Right ventricle myocardium superior (tissue), 1 donor: ENCODE measurements at regions of chr14 and their contacts with region 1.

Region 1: GRCh38 chr14:63852817-63853731 is at the start of gene SYNE2:
- DNase-seq: peak; percentile 85
- ATAC-seq: peak; percentile 93
- total RNA-seq, gene SYNE2: 193 TPM

Region 2: GRCh38 chr14:63632932-63633514 is 220.1 kb before region 1 on chr14:
- intact Hi-C with region 1: no loop called
- DNase-seq: no peak
- ATAC-seq: no peak

Region 3: GRCh38 chr14:63800651-63801375 is 52.3 kb before region 1 on chr14:
- intact Hi-C with region 1: no loop called
- DNase-seq: no peak
- ATAC-seq: no peak

Region 4: DNA sequence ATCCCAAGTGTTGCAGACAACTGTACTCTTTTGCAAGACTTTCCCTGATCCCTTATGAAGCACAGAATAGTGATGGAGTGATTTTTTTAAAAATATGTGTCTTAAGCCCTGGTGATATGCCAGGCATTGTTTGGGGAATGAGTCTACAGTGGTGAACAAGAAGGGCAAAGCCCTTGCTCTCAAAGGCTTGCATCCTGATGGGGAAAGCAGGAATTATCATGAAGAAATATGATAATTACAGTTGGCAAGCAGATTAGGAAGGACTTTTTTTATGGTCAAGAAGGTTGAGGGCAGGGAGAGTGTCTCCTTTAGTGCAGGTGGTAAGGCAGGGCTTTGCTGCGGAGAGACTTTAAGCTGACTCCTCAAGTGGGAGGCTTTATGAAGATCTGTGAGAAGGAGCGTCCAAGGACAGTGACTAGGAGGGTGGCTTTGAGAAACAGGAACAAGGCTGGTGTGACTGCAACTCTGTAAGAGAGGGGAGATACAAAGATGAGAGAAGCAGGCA is 99.9 kb after region 1 on chr14:
- intact Hi-C with region 1: loop called (anchors 10 kb)
- DNase-seq: no peak
- ATAC-seq: peak; percentile 18